AG04449 (cell line): ENCODE measurements at regions of chr5 and their contacts with region 1.

Region 1: GRCh38 chr5:64229163-64229774 is 63.6 kb downstream of the RNF180 start:
- DNase-seq: no peak
- H3K4me3 ChIP-seq: no peak overlapping the region
- CTCF ChIP-seq: peak; percentile 49

Region 2: GRCh38 chr5:64213531-64213930 is 15.7 kb before region 1 on chr5:
- CTCF ChIA-PET with region 1: interaction called, 27 read pairs
- POLR2A ChIA-PET with region 1: no interaction called
- DNase-seq: no peak
- H3K4me3 ChIP-seq: no peak overlapping the region
- CTCF ChIP-seq: no peak

Region 3: DNA sequence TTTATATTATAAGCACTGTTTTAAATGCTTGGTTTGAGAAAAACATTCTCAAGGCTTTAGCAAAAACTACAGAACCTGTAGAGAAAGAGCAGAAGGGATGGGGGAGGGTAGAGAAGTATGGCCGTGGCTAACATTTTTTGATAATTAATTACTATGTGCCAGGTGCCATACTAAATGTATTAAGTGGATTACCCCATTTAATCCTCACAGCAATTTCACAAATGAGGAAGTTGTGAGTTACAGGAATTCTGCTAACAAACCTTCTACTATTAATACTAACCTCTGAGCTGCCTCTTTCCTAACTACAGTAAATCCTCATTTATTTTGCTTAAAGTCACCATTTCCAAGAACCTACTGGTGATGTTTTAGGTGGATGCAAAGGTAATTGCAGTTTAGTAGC is 94.3 kb after region 1 on chr5:
- CTCF ChIA-PET with region 1: no interaction called
- POLR2A ChIA-PET with region 1: no interaction called
- DNase-seq: no peak
- H3K4me3 ChIP-seq: no peak overlapping the region
- CTCF ChIP-seq: no peak

Region 4: GRCh38 chr5:64612344-64612961 is 383.2 kb after region 1 on chr5:
- CTCF ChIA-PET with region 1: interaction called, 213 read pairs
- POLR2A ChIA-PET with region 1: no interaction called
- DNase-seq: no peak
- H3K4me3 ChIP-seq: no peak overlapping the region
- CTCF ChIP-seq: peak; percentile 62

Region 5: DNA sequence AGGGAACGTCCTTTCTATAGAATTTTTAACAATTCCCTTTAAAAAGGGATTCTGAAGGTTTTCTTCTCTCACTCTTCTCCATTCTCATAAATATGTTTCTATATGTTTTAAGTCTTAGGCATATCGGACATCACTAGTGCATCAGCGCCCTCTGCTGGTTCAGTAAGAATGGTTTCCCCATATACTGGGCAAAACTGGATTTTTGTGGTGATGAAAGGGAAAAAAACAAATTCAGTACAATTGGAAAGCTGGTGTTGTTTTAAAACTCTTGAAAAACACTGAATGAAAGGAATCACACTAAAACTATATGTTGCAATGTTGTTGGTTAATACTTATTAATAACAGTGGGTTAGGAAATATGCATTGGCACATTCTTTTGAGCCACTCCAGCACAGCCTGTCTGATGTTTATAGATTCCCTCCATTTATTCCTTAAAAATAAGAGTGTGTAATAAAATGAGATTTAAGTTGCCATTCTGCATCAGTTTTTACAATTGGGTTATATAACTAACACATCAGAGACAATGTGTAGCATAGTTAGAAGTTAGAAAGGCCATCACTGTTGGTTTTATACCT is 555.3 kb after region 1 on chr5:
- CTCF ChIA-PET with region 1: interaction called, 11 read pairs
- POLR2A ChIA-PET with region 1: no interaction called
- DNase-seq: peak; percentile 49
- H3K4me3 ChIP-seq: no peak overlapping the region
- CTCF ChIP-seq: peak; percentile 65